Activated CD4-positive, alpha-beta T cell treated with anti-CD3 and anti-CD28 coated beads, Interleukin-2, amount 10 ng/mL, durations not matched to agents 7 days and 5 days (primary cell): ENCODE measurements at regions of chr2 and their contacts with region 1.

Region 1: GRCh38 chr2:230987137-230988020 is 8.5 kb upstream of the SPATA3 start:
- DNase-seq: peak; percentile 71
- H3K4me3 Mint-ChIP-seq: peak overlapping the region; percentile 53
- H3K27ac Mint-ChIP-seq: no peak overlapping the region
- H3K4me1 Mint-ChIP-seq: peaks cover 34% of the 10 kb centered on the region
- H3K27me3 Mint-ChIP-seq: peaks cover 12% of the 10 kb centered on the region

Region 2: DNA sequence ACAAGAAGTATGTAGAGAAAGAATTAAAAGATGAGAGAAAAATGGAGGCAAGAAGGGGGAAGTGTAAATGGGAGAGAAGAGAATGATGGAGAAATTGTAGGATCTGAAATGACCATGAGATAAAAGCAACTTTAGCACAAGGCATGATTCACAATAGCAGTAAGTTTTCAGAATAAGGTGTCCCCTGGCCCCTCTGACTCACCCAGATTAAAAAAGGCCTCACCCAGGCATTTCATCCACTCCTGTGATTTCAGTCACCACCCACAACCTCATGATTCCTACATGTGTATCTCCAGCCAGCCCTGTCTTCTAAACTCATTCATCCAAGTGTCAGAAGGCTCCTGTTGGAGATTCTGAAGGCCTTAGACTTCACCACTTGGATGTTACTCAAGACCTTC is 514.8 kb before region 1 on chr2:
- CTCF ChIA-PET with region 1: no interaction called
- POLR2A ChIA-PET with region 1: no interaction called
- DNase-seq: no peak
- H3K4me3 Mint-ChIP-seq: no peak overlapping the region
- H3K27ac Mint-ChIP-seq: peak overlapping the region; percentile 62
- H3K4me1 Mint-ChIP-seq: peaks cover 42% of the 10 kb centered on the region
- H3K27me3 Mint-ChIP-seq: no peaks in the 10 kb centered on the region

Region 3: GRCh38 chr2:230824406-230824978 is 162.9 kb before region 1 on chr2:
- CTCF ChIA-PET with region 1: interaction called, 13 read pairs
- POLR2A ChIA-PET with region 1: no interaction called
- DNase-seq: peak; percentile 76
- H3K4me3 Mint-ChIP-seq: peak overlapping the region; percentile 11
- H3K27ac Mint-ChIP-seq: no peak overlapping the region
- H3K4me1 Mint-ChIP-seq: peaks cover 23% of the 10 kb centered on the region
- H3K27me3 Mint-ChIP-seq: peaks cover 34% of the 10 kb centered on the region

Region 4: GRCh38 chr2:230847883-230848388 is 139.4 kb before region 1 on chr2:
- CTCF ChIA-PET with region 1: interaction called, 12 read pairs
- POLR2A ChIA-PET with region 1: no interaction called
- DNase-seq: peak; percentile 86
- H3K4me3 Mint-ChIP-seq: no peak overlapping the region
- H3K27ac Mint-ChIP-seq: no peak overlapping the region
- H3K4me1 Mint-ChIP-seq: peaks cover 9% of the 10 kb centered on the region
- H3K27me3 Mint-ChIP-seq: peaks cover 41% of the 10 kb centered on the region

Region 5: GRCh38 chr2:230893841-230894781 is 93.3 kb before region 1 on chr2:
- CTCF ChIA-PET with region 1: interaction called, 31 read pairs
- POLR2A ChIA-PET with region 1: no interaction called
- DNase-seq: no peak
- H3K4me3 Mint-ChIP-seq: no peak overlapping the region
- H3K27ac Mint-ChIP-seq: no peak overlapping the region
- H3K4me1 Mint-ChIP-seq: peaks cover 25% of the 10 kb centered on the region
- H3K27me3 Mint-ChIP-seq: peaks cover 13% of the 10 kb centered on the region

Region 6: GRCh38 chr2:230902180-230902899 is 85.0 kb before region 1 on chr2:
- CTCF ChIA-PET with region 1: interaction called, 31 read pairs
- POLR2A ChIA-PET with region 1: interaction called, 3 read pairs
- DNase-seq: peak; percentile 69
- H3K4me3 Mint-ChIP-seq: no peak overlapping the region
- H3K27ac Mint-ChIP-seq: no peak overlapping the region
- H3K4me1 Mint-ChIP-seq: peaks cover 33% of the 10 kb centered on the region
- H3K27me3 Mint-ChIP-seq: peaks cover 15% of the 10 kb centered on the region

Region 7: DNA sequence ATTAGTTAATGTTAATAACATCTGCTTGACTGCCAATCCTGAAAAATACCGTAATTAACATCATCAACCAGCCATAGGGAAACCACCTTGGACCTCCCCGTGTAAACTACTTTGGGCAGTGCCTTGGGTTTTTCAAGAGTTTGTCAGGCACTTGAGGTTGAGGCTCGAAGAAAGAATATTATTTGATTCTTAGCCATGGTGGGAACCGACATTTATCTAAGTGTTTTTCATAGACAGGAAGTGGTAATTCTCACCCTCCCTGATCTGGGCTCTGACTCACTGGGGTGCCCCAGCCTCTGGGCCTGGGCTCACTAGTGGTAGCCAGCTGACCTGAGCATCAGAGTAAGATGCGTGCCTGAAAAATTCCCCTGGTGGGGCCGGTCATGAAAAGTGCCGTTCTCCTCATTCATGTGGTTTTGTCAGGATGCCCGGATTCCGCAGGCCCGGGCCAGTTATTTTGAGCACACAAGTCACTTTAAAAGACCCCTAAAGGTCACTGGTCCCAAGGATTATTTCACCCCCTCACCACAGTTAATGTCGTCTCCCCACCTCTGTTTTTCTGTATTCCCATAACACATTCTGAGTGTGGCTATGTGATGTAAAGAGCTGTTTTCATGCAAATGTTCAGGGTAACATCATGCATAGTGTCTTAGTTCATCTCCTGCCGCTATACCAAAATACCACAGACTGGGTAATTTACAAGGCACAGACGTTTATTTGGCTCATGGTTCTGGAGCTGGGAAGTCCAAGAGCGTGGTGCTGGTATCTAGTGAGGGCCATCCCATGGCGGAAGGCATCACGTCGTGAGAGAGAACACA is 13.1 kb before region 1 on chr2:
- CTCF ChIA-PET with region 1: interaction called, 11 read pairs
- POLR2A ChIA-PET with region 1: no interaction called
- DNase-seq: peak; percentile 60
- H3K4me3 Mint-ChIP-seq: peak overlapping the region; percentile 33
- H3K27ac Mint-ChIP-seq: peak overlapping the region; percentile 87
- H3K4me1 Mint-ChIP-seq: peaks cover 57% of the 10 kb centered on the region
- H3K27me3 Mint-ChIP-seq: peaks cover 9% of the 10 kb centered on the region

Region 8: DNA sequence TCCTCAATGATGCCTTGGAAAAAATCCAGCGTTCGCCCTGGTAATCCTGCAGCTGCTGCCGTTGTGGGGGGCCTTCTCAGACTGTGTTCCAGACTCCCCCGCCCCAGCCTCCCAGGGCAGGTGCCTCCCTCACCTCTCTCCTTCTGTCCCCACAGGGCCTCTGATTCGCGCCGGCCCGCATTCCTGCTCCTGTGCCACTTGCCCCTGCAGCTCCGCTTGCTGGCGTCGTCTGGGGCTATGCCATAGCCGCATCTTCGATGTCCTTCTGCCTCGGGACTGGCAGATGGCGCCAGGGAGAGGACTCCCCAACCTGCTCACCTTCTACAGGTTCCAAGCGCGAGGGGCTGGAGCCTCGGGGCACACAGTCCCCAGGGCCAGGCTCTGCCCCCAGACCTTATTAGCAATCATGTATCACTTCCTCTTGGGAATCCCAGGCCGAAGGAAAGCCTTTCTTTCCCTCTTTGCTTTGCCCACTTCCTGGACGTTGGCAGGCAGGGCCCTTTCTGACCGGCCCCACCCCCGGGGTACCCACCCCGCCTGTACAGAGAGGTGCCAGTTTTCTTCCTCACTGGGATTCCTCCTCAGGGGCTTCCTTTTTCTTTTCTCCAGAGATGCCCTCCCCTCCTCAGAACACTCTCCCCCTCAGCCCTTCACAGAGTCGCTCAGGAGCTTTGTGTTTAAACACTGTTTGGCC is 13.0 kb after region 1 on chr2:
- CTCF ChIA-PET with region 1: interaction called, 11 read pairs
- POLR2A ChIA-PET with region 1: no interaction called
- DNase-seq: no peak
- H3K4me3 Mint-ChIP-seq: no peak overlapping the region
- H3K27ac Mint-ChIP-seq: no peak overlapping the region
- H3K4me1 Mint-ChIP-seq: no peaks in the 10 kb centered on the region
- H3K27me3 Mint-ChIP-seq: peaks cover 46% of the 10 kb centered on the region

Region 9: DNA sequence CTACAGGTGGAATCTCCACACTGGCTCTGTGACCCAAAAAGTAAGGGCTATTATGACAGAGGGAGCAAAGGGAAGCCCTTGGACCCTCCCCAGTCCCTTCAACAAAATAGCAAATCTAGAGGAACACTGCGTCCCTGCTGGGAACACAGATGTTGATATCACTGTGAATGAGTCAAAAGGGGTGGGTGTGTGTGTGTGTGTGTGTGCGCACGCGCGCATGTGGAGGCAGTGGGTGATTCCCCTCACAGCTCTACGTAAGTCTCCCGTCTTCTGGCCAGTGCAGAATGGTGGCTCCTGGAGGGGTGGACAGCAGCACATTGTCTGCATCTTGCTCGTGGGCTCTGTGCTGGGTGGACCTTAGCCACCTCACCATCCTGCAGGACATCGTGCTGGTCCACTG is 42.2 kb after region 1 on chr2:
- CTCF ChIA-PET with region 1: no interaction called
- POLR2A ChIA-PET with region 1: no interaction called
- DNase-seq: no peak
- H3K4me3 Mint-ChIP-seq: no peak overlapping the region
- H3K27ac Mint-ChIP-seq: no peak overlapping the region
- H3K4me1 Mint-ChIP-seq: no peaks in the 10 kb centered on the region
- H3K27me3 Mint-ChIP-seq: peaks cover 23% of the 10 kb centered on the region